Posterior cingulate gyrus (tissue), 11 donors: ENCODE measurements at regions of chr12 and their contacts with region 1.

Region 1: DNA sequence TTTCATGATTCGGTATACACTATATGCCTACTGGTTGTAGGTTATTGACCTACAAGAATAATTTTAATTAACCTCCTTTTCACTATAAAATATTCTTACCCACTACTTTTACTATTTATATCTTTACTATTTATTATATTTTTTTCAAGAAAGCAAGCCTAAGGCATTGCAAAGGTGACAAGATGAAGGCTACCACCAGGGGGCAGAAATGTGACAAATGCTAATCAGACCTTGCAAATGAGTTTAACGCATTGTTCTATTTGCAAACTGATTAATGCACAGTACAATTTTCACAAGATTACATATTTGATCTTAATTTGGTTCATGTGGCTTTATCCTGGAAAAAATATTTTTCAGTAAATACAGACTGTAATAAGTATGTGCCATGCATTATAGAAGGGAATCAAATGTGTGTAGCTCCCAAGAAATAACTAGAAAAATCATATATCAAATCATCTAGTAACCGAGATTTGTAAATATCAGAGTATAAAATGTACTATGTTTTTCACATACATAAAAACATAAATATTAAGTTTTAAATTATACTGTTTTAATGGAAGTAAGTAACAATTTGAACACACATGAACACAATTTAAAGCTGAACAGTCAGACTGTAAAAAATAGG is 107.0 kb downstream of the ADAMTS20 start:
- DNase-seq: peak in 6 of 10 donors; percentile 14 to 68 (median 40)

Region 2: DNA sequence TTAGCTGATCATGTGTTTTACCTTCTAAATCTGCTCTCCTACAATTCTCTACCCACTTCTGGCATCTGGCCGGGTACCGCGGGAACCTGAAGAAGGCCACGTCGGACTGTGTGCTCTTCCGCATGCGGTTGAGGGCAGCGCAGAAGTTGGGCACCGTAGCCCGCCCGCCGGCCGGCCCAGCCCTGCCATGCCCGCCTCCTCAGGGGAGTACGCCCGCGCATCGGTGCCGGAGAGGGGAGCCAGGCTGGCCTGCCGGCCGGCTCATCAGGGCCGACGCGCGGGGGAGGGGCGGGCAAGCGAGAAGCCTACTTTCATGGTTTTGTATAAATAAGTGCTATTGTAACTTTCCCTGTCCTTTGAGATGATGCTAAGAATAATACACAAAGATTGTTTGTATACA is 126.8 kb after region 1 on chr12:
- intact Hi-C with region 1: no loop called
- DNase-seq: no peak

Region 3: GRCh38 chr12:43728117-43728516 is 283.1 kb after region 1 on chr12:
- intact Hi-C with region 1: loop called (anchors 2 kb)
- DNase-seq: no peak

Region 4: GRCh38 chr12:43882578-43883178 is 437.6 kb after region 1 on chr12:
- intact Hi-C with region 1: loop called (anchors 2 kb)
- DNase-seq: peak in 2 of 10 donors; percentile 6 to 23